Activated CD4-positive, alpha-beta T cell treated with anti-CD3 and anti-CD28 coated beads for 36 hours (primary cell): ENCODE measurements at regions of chr14 and their contacts with region 1.

Region 1: DNA sequence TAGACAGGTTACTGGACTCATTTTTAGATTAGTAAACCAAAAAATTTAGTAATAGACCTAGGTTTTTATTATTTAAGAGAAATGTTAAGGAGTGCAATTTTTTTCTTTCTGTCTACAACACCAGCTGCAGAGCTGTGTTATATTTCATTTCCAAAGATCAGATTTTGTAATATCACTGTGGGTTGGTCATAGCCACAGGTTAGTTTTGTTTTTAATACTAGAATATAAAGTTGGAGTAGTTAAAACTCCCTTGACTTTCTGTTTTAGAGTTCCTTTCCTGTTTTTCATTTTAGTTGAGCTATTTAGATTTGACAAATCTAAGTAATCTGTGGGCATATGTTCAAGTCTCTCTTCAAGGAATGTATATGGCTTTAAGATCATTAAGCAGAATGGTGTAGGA is 30.7 kb upstream of the GARIN2 start:
- DNase-seq: no peak
- ATAC-seq: peak; percentile 95
- H3K4me3 Mint-ChIP-seq: no peak overlapping the region
- H3K27ac Mint-ChIP-seq: peak overlapping the region; percentile 51
- H3K4me1 Mint-ChIP-seq: peaks cover 12% of the 10 kb centered on the region
- H3K27me3 Mint-ChIP-seq: no peaks in the 10 kb centered on the region

Region 2: GRCh38 chr14:66910311-66910840 is 248.2 kb before region 1 on chr14:
- CTCF ChIA-PET with region 1: no interaction called
- POLR2A ChIA-PET with region 1: no interaction called
- intact Hi-C with region 1: no loop called
- DNase-seq: no peak
- ATAC-seq: no peak
- H3K4me3 Mint-ChIP-seq: no peak overlapping the region
- H3K27ac Mint-ChIP-seq: no peak overlapping the region
- H3K4me1 Mint-ChIP-seq: no peaks in the 10 kb centered on the region
- H3K27me3 Mint-ChIP-seq: no peaks in the 10 kb centered on the region

Region 3: DNA sequence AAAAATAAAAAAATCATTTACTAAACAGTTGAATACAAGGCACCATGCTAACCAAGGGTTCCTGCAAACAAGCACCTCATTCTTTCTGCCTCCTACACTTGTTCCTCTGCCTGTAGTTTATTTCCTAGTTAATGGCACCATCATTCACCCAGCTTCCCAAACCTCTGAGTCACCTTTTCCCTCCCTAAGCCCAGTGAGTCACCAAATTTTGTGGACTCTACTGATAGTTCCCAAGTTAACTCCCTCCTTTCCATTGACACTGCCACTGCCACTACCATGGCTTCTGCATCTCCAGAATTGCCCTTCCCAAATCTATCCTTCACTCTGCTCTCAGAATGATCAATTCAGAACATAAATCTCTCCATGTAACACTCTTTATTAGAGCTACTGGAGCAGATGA is 28.6 kb after region 1 on chr14:
- CTCF ChIA-PET with region 1: no interaction called
- POLR2A ChIA-PET with region 1: no interaction called
- intact Hi-C with region 1: loop called in 1 of 2 experiments (anchors 1 kb)
- DNase-seq: no peak
- ATAC-seq: no peak
- H3K4me3 Mint-ChIP-seq: no peak overlapping the region
- H3K27ac Mint-ChIP-seq: no peak overlapping the region
- H3K4me1 Mint-ChIP-seq: peaks cover 20% of the 10 kb centered on the region
- H3K27me3 Mint-ChIP-seq: no peaks in the 10 kb centered on the region